CD8-positive, alpha-beta T cell (primary cell): ENCODE measurements at regions of chr3 and their contacts with region 1.

Region 1: DNA sequence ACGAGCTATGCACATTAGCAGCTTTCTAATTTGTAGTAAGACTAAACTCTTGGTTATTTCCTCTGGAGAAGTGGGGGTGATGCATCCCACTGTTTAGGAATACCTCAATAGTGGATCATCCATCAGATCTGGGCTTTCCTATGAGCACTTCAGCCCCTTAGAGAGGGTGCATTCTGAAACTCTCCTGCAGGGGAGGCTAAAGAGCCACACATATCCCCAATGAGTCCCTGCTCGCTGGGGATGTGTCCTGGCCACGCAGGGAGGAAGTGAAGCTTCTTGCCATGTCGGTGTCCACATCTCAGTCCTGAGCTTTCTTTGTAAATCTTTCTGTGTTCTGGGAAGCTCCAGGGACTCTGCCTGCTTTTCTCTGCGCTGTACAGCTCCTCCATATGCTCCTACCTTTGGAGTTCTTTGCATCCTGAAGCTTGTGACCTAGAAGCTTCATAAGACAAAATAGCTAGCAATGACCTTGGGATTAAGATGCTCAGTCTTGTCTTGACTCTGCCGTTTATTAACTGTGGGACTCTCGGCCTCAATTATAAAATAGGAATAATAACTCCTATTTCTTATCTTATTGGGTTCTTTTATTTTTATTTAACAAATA is 28.3 kb upstream of the MASP1 start:
- DNase-seq: peak; percentile 8 to 66 (median 39)
- ATAC-seq: peak; percentile 84
- H3K4me3 ChIP-seq: no peak overlapping the region
- H3K4me3 Mint-ChIP-seq: no peak overlapping the region
- H3K27ac ChIP-seq: no peak overlapping the region
- H3K27ac Mint-ChIP-seq: no peak overlapping the region
- H3K4me1 ChIP-seq: peaks cover 6% of the 10 kb centered on the region
- H3K4me1 Mint-ChIP-seq: peaks cover 13% of the 10 kb centered on the region
- H3K27me3 ChIP-seq: peaks cover 4 to 5% of the 10 kb centered on the region in 2 experiments
- H3K27me3 Mint-ChIP-seq: peaks cover 43% of the 10 kb centered on the region
- CTCF ChIP-seq: peak; percentile 54

Region 2: DNA sequence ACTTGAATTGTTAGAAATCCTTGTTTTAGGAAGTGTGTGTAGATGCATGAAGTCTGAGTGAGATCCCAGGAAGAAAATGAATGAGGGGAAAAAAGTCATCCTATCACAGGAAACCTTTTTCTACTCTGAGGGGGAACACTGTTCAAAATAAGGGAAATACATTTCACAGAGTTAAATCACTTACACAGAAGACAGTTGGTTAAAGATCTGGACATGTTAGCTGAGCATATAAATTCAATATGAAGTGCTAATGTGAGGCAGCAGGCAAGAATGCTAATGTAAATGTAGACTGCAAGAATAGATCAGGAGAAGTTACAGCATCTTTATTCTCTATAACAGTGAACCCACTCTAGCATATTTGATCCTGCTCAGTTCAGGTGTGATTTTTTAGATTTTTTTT is 755.2 kb before region 1 on chr3:
- CTCF ChIA-PET with region 1: no interaction called
- POLR2A ChIA-PET with region 1: no interaction called
- intact Hi-C with region 1: no loop called
- DNase-seq: no peak
- ATAC-seq: no peak
- H3K4me3 ChIP-seq: no peak overlapping the region
- H3K4me3 Mint-ChIP-seq: no peak overlapping the region
- H3K27ac ChIP-seq: no peak overlapping the region
- H3K27ac Mint-ChIP-seq: no peak overlapping the region
- H3K4me1 ChIP-seq: peaks cover 38% of the 10 kb centered on the region
- H3K4me1 Mint-ChIP-seq: peaks cover 77% of the 10 kb centered on the region
- H3K27me3 ChIP-seq: no peaks in the 10 kb centered on the region
- H3K27me3 Mint-ChIP-seq: no peaks in the 10 kb centered on the region
- CTCF ChIP-seq: no peak

Region 3: GRCh38 chr3:187016639-187017345 is 303.0 kb before region 1 on chr3:
- CTCF ChIA-PET with region 1: no interaction called
- POLR2A ChIA-PET with region 1: no interaction called
- intact Hi-C with region 1: no loop called
- DNase-seq: peak in 1 of 9 experiments; percentile 43
- ATAC-seq: no peak
- H3K4me3 ChIP-seq: no peak overlapping the region
- H3K4me3 Mint-ChIP-seq: no peak overlapping the region
- H3K27ac ChIP-seq: peak overlapping the region in 1 of 2 experiments; percentile 16
- H3K27ac Mint-ChIP-seq: peak overlapping the region; percentile 88
- H3K4me1 ChIP-seq: peaks cover 51% of the 10 kb centered on the region
- H3K4me1 Mint-ChIP-seq: peaks cover 77% of the 10 kb centered on the region
- H3K27me3 ChIP-seq: no peaks in the 10 kb centered on the region
- H3K27me3 Mint-ChIP-seq: no peaks in the 10 kb centered on the region
- CTCF ChIP-seq: no peak

Region 4: DNA sequence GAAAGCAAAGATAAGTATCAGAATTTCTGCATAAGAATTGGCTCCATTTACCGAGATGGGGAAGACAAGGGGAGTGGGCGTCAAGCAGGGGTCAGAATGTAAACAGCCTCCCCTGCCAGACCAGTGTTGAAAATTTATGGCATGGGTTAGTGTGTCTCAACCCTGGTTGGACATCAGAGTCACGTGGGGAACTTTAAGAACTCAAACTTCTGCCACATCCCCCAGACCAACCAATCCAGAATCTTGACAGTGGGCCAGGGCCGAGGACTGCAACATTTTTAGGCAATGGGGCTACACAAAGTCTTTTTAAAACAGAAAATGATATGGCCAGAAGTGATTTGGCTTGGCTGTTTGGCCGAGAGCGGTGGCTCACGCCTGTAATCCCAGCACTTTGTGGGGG is 13.9 kb before region 1 on chr3:
- CTCF ChIA-PET with region 1: interaction called, 22 read pairs
- POLR2A ChIA-PET with region 1: interaction called, 3 read pairs
- intact Hi-C with region 1: no loop called
- DNase-seq: no peak
- ATAC-seq: no peak
- H3K4me3 ChIP-seq: no peak overlapping the region
- H3K4me3 Mint-ChIP-seq: no peak overlapping the region
- H3K27ac ChIP-seq: no peak overlapping the region
- H3K27ac Mint-ChIP-seq: no peak overlapping the region
- H3K4me1 ChIP-seq: no peaks in the 10 kb centered on the region
- H3K4me1 Mint-ChIP-seq: no peaks in the 10 kb centered on the region
- H3K27me3 ChIP-seq: peaks cover 0 to under 1% of the 10 kb centered on the region in 2 experiments
- H3K27me3 Mint-ChIP-seq: peaks cover 22% of the 10 kb centered on the region
- CTCF ChIP-seq: no peak

Region 5: GRCh38 chr3:187662848-187663409 is 343.1 kb after region 1 on chr3:
- CTCF ChIA-PET with region 1: interaction called, 23 read pairs
- POLR2A ChIA-PET with region 1: no interaction called
- intact Hi-C with region 1: no loop called
- DNase-seq: no peak
- ATAC-seq: no peak
- H3K4me3 ChIP-seq: no peak overlapping the region
- H3K4me3 Mint-ChIP-seq: no peak overlapping the region
- H3K27ac ChIP-seq: no peak overlapping the region
- H3K27ac Mint-ChIP-seq: no peak overlapping the region
- H3K4me1 ChIP-seq: no peaks in the 10 kb centered on the region
- H3K4me1 Mint-ChIP-seq: no peaks in the 10 kb centered on the region
- H3K27me3 ChIP-seq: peaks cover 0 to under 1% of the 10 kb centered on the region in 2 experiments
- H3K27me3 Mint-ChIP-seq: peaks cover 32% of the 10 kb centered on the region
- CTCF ChIP-seq: no peak

Region 6: DNA sequence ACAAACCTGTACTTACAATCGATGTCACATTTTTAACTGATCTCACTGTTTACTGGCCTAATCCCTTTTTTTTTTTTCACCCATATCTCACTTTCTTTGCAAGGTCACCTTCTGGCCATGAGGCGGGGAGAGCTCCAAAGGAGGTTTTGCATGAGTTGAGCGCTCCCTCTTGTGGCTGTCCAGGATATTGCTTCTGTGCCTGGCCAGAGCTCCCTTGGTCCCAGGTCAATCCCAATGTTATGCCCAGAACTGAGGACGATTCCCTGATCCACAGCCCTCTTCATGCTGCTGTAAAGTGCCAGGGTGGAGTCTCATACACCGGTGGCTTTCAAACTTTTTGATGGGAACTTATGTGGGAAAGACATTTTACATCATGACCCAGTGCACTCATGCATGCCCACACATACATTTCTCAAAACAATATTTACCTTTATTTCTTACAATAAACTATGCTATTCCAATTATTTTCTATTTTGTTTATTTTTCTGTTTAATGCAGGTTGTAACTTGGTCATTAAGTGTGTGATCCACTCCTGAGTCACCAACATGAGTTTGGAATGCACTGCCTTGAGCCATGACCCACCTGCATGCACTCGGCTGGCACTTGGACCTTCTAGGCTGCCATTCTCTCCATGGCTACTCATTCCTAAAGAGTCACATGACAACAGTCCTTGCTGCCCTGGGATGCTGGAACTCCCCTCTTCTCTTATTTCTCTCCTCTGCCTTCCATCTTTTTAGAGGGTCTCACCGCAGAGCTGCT is 360.0 kb after region 1 on chr3:
- CTCF ChIA-PET with region 1: interaction called, 421 read pairs
- POLR2A ChIA-PET with region 1: interaction called, 3 read pairs
- intact Hi-C with region 1: loop called (anchors 1 kb)
- DNase-seq: peak; percentile 32 to 75 (median 63)
- ATAC-seq: peak; percentile 54
- H3K4me3 ChIP-seq: no peak overlapping the region
- H3K4me3 Mint-ChIP-seq: no peak overlapping the region
- H3K27ac ChIP-seq: no peak overlapping the region
- H3K27ac Mint-ChIP-seq: no peak overlapping the region
- H3K4me1 ChIP-seq: no peaks in the 10 kb centered on the region
- H3K4me1 Mint-ChIP-seq: no peaks in the 10 kb centered on the region
- H3K27me3 ChIP-seq: no peaks in the 10 kb centered on the region
- H3K27me3 Mint-ChIP-seq: peaks cover 40% of the 10 kb centered on the region
- CTCF ChIP-seq: peak; percentile 94

Region 7: GRCh38 chr3:187705164-187705563 is 385.4 kb after region 1 on chr3:
- CTCF ChIA-PET with region 1: interaction called, 184 read pairs
- POLR2A ChIA-PET with region 1: no interaction called
- intact Hi-C with region 1: no loop called
- DNase-seq: no peak
- ATAC-seq: no peak
- H3K4me3 ChIP-seq: no peak overlapping the region
- H3K4me3 Mint-ChIP-seq: no peak overlapping the region
- H3K27ac ChIP-seq: no peak overlapping the region
- H3K27ac Mint-ChIP-seq: no peak overlapping the region
- H3K4me1 ChIP-seq: no peaks in the 10 kb centered on the region
- H3K4me1 Mint-ChIP-seq: no peaks in the 10 kb centered on the region
- H3K27me3 ChIP-seq: no peaks in the 10 kb centered on the region
- H3K27me3 Mint-ChIP-seq: peaks cover 3% of the 10 kb centered on the region
- CTCF ChIP-seq: no peak

Region 8: GRCh38 chr3:188954590-188955208 is 1634.9 kb after region 1 on chr3:
- CTCF ChIA-PET with region 1: interaction called, 5 read pairs
- POLR2A ChIA-PET with region 1: no interaction called
- intact Hi-C with region 1: loop called in 1 of 2 experiments (anchors 5 kb)
- DNase-seq: peak; percentile 47 to 84 (median 71)
- ATAC-seq: peak; percentile 57
- H3K4me3 ChIP-seq: no peak overlapping the region
- H3K4me3 Mint-ChIP-seq: no peak overlapping the region
- H3K27ac ChIP-seq: no peak overlapping the region
- H3K27ac Mint-ChIP-seq: no peak overlapping the region
- H3K4me1 ChIP-seq: no peaks in the 10 kb centered on the region
- H3K4me1 Mint-ChIP-seq: peaks cover 5% of the 10 kb centered on the region
- H3K27me3 ChIP-seq: no peaks in the 10 kb centered on the region
- H3K27me3 Mint-ChIP-seq: no peaks in the 10 kb centered on the region
- CTCF ChIP-seq: peak; percentile 64